Prostate gland (tissue), 2 donors: ENCODE measurements at regions of chr11 and their contacts with region 1.

Region 1: GRCh38 chr11:19639603-19640105 is 73.0 kb upstream of the NAV2 start:
- DNase-seq: no peak
- H3K4me3 ChIP-seq: no peak overlapping the region
- H3K27ac ChIP-seq: no peak overlapping the region
- H3K4me1 ChIP-seq: no peaks in the 10 kb centered on the region
- H3K27me3 ChIP-seq: no peaks in the 10 kb centered on the region
- CTCF ChIP-seq: no peak
- POLR2A ChIP-seq: no peak

Region 2: GRCh38 chr11:19673924-19674729 is 34.5 kb after region 1 on chr11:
- intact Hi-C with region 1: loop called (anchors 5 kb)
- DNase-seq: peak; percentile 76
- H3K4me3 ChIP-seq: no peak overlapping the region
- H3K27ac ChIP-seq: peak overlapping the region; percentile 69 to 83
- H3K4me1 ChIP-seq: no peaks in the 10 kb centered on the region
- H3K27me3 ChIP-seq: no peaks in the 10 kb centered on the region
- CTCF ChIP-seq: no peak
- POLR2A ChIP-seq: no peak